WTC11 (cell line): ENCODE measurements at regions of chr15 and their contacts with region 1.

Region 1: DNA sequence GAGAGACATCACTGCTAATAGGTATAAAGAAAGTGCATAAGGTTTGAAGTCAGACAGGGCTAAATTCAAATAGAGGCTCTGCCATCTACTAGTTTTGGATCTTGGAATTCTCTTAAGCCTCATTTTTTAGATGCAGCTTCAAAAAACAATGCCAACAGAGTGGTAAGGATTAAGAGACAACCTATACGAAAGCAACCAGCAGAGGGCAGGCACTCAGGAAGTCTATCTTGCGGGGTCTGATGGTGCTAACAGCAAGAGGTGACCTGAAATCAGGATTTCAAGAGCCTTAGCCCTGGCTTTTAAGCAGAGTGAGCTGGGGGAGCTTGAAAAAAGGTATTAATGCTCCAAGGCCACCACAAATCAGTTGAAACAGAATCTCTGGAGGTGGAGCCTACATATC is 40.7 kb downstream of the LDHAL6B start:
- DNase-seq: peak; percentile 67
- ATAC-seq: peak; percentile 95
- H3K4me3 Mint-ChIP-seq: no peak overlapping the region
- H3K27ac Mint-ChIP-seq: peak overlapping the region; percentile 23; the same call in 1 of the 2 replicates
- H3K4me1 Mint-ChIP-seq: peaks cover 3% of the 10 kb centered on the region
- H3K27me3 Mint-ChIP-seq: no peaks in the 10 kb centered on the region
- CTCF ChIP-seq: peak; percentile 45

Region 2: GRCh38 chr15:59237119-59237855 is 10.1 kb before region 1 on chr15:
- CTCF ChIA-PET with region 1: interaction called, 10 read pairs
- POLR2A ChIA-PET with region 1: no interaction called
- DNase-seq: no peak
- ATAC-seq: no peak
- H3K4me3 Mint-ChIP-seq: no peak overlapping the region
- H3K27ac Mint-ChIP-seq: 0 out of 2 replicates have a peak overlapping the region, but pooled peaks have one; percentile 66
- H3K4me1 Mint-ChIP-seq: peaks cover 22% of the 10 kb centered on the region
- H3K27me3 Mint-ChIP-seq: no peaks in the 10 kb centered on the region
- CTCF ChIP-seq: no peak

Region 3: DNA sequence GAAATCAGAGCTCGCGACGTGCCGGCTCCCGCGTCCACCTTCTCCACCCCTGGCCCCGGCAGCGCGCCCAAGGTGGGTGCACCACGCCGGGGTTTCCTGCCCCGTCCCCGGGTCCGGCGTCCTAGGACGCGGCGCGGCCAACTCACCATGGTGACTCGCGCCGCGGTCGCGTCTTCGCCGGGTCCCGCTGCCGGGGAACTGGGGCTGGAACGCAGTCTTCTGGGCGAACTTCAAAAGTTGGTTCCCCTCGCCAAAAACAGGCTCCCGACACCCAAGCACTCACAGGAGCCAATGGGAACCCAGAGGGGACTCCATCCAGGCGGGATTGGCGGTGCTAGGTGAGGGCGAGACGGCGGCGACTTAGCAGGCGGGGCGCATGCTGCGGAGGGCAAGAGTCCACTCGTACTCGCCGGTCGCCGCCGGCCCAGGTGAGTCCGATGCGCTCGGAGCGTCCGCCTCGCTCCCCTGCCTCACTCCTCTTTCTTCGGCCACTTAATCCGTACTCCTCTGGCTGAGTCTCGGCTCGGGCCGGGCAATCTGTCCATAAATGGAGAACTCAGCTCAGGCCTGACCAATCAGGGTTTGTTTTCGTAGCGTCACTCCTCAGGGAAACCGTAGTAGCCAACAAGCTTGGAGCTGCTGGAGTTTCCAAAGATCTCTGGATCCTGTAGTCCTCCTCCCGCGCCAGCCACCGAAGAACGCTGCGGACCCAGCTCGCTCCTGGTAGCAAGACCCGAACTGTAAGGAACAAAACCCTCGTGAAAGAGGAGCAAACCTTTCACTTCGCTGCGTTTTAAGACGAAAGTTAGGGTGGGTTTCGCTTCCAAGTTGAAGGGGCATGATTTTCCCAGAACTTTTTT is 125.2 kb after region 1 on chr15 and contains the start of gene MYO1E:
- CTCF ChIA-PET with region 1: interaction called, 22 read pairs
- POLR2A ChIA-PET with region 1: interaction called, 9 read pairs
- DNase-seq: peak; percentile 91
- ATAC-seq: peak; percentile 95
- H3K4me3 Mint-ChIP-seq: peak within 1 kb of the TSS; percentile 91
- H3K27ac Mint-ChIP-seq: peak within 1 kb of the TSS; percentile 96
- H3K4me1 Mint-ChIP-seq: peaks cover 26% of the 10 kb centered on the region
- H3K27me3 Mint-ChIP-seq: peaks cover 26% of the 10 kb centered on the region
- CTCF ChIP-seq: no peak
- total RNA-seq, gene MYO1E: 83.6 to 104 TPM (median 99.9 TPM) in 3 replicates

Region 4: DNA sequence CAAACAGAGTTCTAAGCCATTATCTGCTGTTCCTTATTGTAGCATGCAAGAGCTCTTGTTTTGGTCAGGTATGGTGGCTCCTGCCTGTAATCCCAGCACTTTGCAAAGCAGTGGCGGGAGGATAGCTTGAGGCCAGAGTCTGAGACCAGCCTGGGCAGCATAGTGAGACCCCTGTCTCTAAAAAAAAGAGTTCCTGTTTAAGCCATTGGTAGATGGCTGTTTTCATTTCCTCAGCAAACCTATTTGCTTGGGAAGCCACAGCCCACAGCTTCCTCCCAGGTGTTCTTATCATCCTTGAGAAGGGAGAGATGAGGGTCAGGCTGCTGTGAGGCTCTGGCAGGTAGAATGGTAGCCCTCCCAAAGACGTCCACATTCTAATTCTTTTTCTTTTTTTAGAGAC is 166.2 kb after region 1 on chr15:
- CTCF ChIA-PET with region 1: interaction called, 11 read pairs
- POLR2A ChIA-PET with region 1: interaction called, 3 read pairs
- DNase-seq: no peak
- ATAC-seq: no peak
- H3K4me3 Mint-ChIP-seq: no peak overlapping the region
- H3K27ac Mint-ChIP-seq: no peak overlapping the region
- H3K4me1 Mint-ChIP-seq: peaks cover 7% of the 10 kb centered on the region
- H3K27me3 Mint-ChIP-seq: peaks cover 15% of the 10 kb centered on the region
- CTCF ChIP-seq: no peak

Region 5: GRCh38 chr15:59492389-59493377 is 245.3 kb after region 1 on chr15:
- CTCF ChIA-PET with region 1: interaction called, 62 read pairs
- POLR2A ChIA-PET with region 1: no interaction called
- DNase-seq: peak; percentile 63
- ATAC-seq: peak; percentile 95
- H3K4me3 Mint-ChIP-seq: peak overlapping the region; percentile 46
- H3K27ac Mint-ChIP-seq: no peak overlapping the region
- H3K4me1 Mint-ChIP-seq: peaks cover 9% of the 10 kb centered on the region
- H3K27me3 Mint-ChIP-seq: peaks cover 4% of the 10 kb centered on the region
- CTCF ChIP-seq: peak; percentile 64